ENCODE measurements at regions of chr6 and their contacts with region 1.

Region 1: DNA sequence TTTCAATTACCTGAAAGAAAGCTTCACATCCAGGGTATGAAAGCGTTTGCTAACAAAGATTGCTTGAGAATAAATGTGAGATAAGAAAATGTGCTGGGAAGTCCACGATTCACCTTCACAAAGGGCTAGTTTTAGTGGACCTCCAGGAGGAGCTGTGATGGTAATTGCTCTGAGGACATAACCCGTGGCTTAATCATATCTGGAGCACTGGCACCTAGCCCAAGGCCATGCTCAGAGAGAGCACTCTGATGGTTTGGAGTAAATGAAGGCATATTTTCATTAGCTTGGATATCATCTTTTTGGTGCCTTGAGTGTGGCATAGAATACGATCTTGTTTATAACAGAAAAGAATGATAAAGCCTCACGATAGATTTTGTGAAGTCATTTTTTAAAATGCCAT is 46.9 kb upstream of the BACH2 start:
- DNase-seq: no peak

Region 2: DNA sequence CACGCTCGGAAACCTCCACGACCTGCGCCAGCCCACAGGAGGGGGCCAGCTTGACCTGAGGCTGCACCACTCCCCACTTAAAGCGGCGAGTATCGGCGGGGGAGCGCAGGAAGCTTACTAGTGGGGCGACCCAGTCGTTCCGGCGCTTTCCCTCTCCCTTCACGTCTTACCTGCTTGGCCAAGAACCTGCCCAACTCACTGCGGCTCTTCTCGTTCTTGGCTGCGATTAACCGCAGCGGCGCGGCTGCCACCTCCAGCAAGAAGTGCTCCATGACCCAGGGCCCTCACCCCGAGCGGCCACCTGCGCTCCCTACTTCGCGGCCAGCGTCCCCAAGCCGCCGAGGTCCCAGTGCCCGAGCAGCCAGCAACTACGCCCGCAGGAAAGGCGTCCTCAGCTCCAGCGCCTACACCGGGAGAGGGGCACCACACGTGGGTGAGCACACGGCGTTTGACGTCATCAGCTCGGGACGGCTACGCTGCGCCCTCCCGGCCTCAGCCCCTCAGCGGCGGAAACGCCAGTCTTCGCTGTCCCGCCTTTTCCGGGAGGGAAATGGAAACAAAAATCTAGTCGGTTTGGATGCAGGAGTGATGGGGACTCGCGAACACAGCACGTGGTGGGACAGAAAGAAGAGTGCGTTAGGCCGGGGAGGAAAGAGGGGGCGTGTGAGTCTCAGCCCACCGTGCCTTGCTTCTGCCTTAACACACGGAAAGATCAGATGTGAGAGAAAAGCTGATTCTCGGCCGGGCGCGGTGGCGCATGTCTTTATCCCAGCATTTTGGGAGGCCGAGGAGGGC is 524.0 kb before region 1 on chr6 and contains the start of gene MDN1:
- in situ Hi-C with region 1: no loop called
- DNase-seq: peak; percentile 91
- total RNA-seq, gene MDN1: 1.6 and 3.8 TPM in 2 replicates

Region 3: GRCh38 chr6:89834884-89835792 is 508.4 kb before region 1 on chr6:
- in situ Hi-C with region 1: no loop called
- DNase-seq: no peak

Region 4: GRCh38 chr6:90375681-90376439 is 32.3 kb after region 1 on chr6:
- in situ Hi-C with region 1: loop called (anchors 5 kb)
- DNase-seq: peak; percentile 53